ENCODE measurements at regions of chr1 and their contacts with region 1.

Region 1: DNA sequence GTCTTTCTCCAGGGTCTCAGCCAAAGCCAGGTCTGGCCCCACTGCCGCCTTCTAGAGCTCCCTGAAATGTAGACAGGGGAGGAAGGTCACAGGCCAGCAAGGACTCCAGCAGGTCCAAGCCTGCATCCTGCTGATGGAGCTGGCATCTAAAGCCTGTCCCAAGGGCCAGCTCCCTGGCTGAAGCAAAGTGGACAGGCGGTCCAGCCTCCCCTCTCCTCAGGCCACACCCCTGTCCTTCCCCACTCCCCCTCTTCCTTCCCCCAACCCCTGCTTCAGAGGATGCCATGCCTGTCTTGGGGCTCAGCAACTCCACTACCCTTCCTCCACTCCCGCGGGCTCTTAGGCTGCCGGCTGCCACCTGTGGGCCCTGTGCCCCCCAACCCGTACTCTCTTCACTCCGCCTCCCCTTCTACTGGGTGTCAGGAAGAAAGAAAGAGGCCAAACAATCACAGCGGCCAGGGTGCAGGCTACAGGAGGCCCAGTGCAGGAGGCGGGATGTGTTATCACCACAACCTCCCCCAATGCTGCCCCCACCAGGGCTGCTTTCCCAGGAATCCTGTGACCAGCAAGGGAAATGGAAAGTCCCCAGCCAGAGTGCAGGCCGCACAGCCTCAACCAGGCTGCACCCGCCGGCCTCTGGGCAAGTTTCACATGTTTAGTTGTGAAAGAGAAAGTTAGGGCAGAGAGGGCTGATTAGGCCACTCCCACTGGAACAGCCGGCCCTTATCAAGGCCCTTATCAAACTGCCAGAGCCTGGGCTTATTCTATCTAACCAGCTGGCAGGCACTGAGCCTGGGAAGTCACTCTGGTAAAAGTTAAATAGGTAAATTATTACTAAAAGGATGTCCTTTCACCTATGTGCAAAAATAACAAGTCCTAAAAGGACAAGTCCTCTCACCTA is 34.1 kb downstream of the ACOT7 start:
- DNase-seq: peak; percentile 85 to 87
- ATAC-seq: peak; percentile 80
- H3K4me3 ChIP-seq: no peak overlapping the region
- H3K27ac ChIP-seq: peak overlapping the region in 1 of 2 donors; percentile 70
- H3K4me1 ChIP-seq: no peaks in the 10 kb centered on the region
- H3K27me3 ChIP-seq: no peaks in the 10 kb centered on the region

Region 2: GRCh38 chr1:5651964-5652821 is 707.3 kb before region 1 on chr1:
- intact Hi-C with region 1: no loop called
- DNase-seq: peak in 1 of 2 donors; percentile 68
- ATAC-seq: no peak
- H3K4me3 ChIP-seq: no peak overlapping the region
- H3K27ac ChIP-seq: no peak overlapping the region
- H3K4me1 ChIP-seq: no peaks in the 10 kb centered on the region
- H3K27me3 ChIP-seq: no peaks in the 10 kb centered on the region

Region 3: GRCh38 chr1:6401673-6402072 is 42.2 kb after region 1 on chr1:
- intact Hi-C with region 1: loop called (anchors 2 to 5 kb)
- DNase-seq: no peak
- ATAC-seq: no peak
- H3K4me3 ChIP-seq: no peak overlapping the region
- H3K27ac ChIP-seq: no peak overlapping the region
- H3K4me1 ChIP-seq: no peaks in the 10 kb centered on the region
- H3K27me3 ChIP-seq: no peaks in the 10 kb centered on the region

Region 4: DNA sequence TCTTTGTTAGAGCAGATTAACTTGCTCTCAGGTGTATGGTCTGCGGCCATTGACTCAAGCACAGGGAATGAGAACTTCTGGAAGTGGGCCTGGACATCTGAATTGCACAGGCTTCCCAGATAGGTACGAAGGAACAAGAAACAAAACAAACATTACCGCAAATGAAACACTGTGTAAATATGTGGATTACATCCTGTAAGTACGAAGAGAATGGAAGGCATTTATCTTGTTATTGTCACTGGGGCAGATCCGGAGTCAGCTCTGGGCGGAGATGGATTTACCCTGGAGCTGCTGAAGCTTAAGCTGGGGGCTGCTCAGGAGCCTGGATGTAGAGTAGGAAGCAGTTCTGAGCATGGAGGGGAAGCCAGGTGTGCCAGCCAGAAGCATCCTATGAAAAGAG is 53.4 kb after region 1 on chr1:
- intact Hi-C with region 1: loop called (anchors 2 to 5 kb)
- DNase-seq: no peak
- ATAC-seq: no peak
- H3K4me3 ChIP-seq: no peak overlapping the region
- H3K27ac ChIP-seq: no peak overlapping the region
- H3K4me1 ChIP-seq: no peaks in the 10 kb centered on the region
- H3K27me3 ChIP-seq: no peaks in the 10 kb centered on the region

Region 5: DNA sequence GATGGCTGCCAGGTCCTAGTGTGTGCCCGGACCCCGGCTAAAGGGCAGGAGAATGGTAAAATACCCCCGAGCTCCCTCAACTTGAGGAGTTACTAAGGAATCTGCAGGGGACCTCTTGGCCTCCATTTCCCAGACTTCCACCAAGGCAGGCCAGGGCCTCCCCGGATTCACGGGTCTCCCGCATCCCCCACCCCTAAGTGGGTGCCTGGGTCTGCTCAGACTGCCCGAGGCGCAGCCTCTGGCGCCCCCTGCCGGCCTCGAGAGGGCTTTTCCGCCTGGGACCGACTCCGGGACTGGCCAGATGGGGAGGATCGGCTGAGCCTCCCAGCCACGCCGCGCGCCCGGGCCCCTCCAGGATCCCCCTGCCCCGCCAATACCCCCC is 130.3 kb after region 1 on chr1:
- intact Hi-C with region 1: no loop called
- DNase-seq: peak; percentile 75 to 91
- ATAC-seq: peak; percentile 74
- H3K4me3 ChIP-seq: peak overlapping the region; percentile 62
- H3K27ac ChIP-seq: no peak overlapping the region
- H3K4me1 ChIP-seq: no peaks in the 10 kb centered on the region
- H3K27me3 ChIP-seq: no peaks in the 10 kb centered on the region

Region 6: GRCh38 chr1:6523566-6523965 is 164.1 kb after region 1 on chr1:
- intact Hi-C with region 1: no loop called
- DNase-seq: peak; percentile 37 to 48
- ATAC-seq: no peak
- H3K4me3 ChIP-seq: no peak overlapping the region
- H3K27ac ChIP-seq: no peak overlapping the region
- H3K4me1 ChIP-seq: peaks cover 0 to 4% of the 10 kb centered on the region in 2 donors
- H3K27me3 ChIP-seq: no peaks in the 10 kb centered on the region